ENCODE measurements at regions of chr14 and their contacts with region 1.

Region 1: DNA sequence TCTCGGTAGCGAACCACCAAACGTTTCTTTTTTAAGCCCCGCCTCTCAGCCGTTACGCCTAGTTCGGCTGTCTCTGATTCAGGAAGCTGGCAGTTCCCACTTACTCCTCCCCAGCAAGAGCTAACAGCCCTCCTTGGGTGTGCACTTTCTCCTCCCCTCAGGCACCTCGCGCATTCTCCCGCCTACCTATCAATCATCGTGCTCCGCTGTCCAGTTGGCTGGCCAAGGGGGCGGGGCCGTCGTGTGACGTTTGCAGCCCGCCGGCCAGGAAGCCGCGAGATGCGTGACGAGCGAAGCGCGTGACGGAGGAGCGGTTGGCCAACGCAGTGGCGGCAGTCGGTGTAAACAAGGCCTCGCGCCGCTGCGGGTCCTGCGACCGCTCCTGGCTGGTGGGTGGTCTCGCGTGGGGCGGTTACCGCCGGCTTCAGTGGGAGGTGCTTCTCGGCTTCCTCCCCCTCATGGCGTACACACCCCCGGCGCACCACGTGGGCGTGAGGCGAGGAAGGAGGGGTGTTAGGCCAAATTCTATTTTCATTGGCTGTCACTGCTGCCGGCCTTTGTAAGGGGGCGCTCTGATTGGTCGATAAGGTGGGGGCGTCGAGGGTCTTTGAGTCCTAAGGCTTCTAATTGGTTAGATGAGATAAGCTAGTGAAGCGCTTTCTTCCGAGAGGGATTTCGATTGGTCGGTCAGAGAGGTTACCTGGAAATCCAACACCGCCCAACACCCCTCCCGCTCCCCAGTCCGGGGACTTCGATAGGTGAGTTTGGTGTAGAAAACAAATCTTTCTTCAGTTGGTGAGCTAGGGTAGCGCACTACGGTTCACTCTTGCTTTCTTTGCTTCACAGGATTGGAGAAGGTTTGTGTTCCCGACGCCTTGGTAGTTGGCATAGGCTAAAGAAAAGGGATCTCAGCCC is at the starts of genes DCAF11 and NRL:
- DNase-seq: peak; percentile 95 to 100 (median 98)
- ATAC-seq: peak; percentile 82
- H3K4me3 ChIP-seq: peak within 1 kb of the TSS; percentile 72 to 87
- H3K4me3 Mint-ChIP-seq: peak within 1 kb of the TSS; percentile 98
- H3K27ac ChIP-seq: peak within 1 kb of the TSS; percentile 97 to 99
- H3K27ac Mint-ChIP-seq: peak within 1 kb of the TSS; percentile 100
- H3K4me1 ChIP-seq: peaks cover 19% of the 10 kb centered on the region
- H3K4me1 Mint-ChIP-seq: peaks cover 31% of the 10 kb centered on the region
- H3K27me3 ChIP-seq: no peaks in the 10 kb centered on the region
- H3K27me3 Mint-ChIP-seq: no peaks in the 10 kb centered on the region
- CTCF ChIP-seq: no peak
- total RNA-seq, gene DCAF11: 88.7 to 89.7 TPM
- total RNA-seq, gene NRL: 3.4 to 3.8 TPM

Region 2: GRCh38 chr14:23301288-23301968 is 813.4 kb before region 1 on chr14:
- CTCF ChIA-PET with region 1: no interaction called
- POLR2A ChIA-PET with region 1: no interaction called
- intact Hi-C with region 1: loop called in 1 of 2 experiments (anchors 10 kb)
- DNase-seq: peak; percentile 93 to 99 (median 97)
- ATAC-seq: peak; percentile 74
- H3K4me3 ChIP-seq: peak overlapping the region; percentile 77 to 97
- H3K4me3 Mint-ChIP-seq: peak overlapping the region; percentile 97
- H3K27ac ChIP-seq: peak overlapping the region; percentile 97
- H3K27ac Mint-ChIP-seq: peak overlapping the region; percentile 98
- H3K4me1 ChIP-seq: peaks cover 19% of the 10 kb centered on the region
- H3K4me1 Mint-ChIP-seq: peaks cover 27% of the 10 kb centered on the region
- H3K27me3 ChIP-seq: no peaks in the 10 kb centered on the region
- H3K27me3 Mint-ChIP-seq: peaks cover 14% of the 10 kb centered on the region
- CTCF ChIP-seq: peak; percentile 68

Region 3: GRCh38 chr14:24058260-24058950 is 56.4 kb before region 1 on chr14:
- CTCF ChIA-PET with region 1: interaction called, 873 read pairs
- POLR2A ChIA-PET with region 1: interaction called, 8 read pairs
- intact Hi-C with region 1: no loop called
- DNase-seq: peak in 4 of 9 experiments; percentile 25 to 71 (median 58)
- ATAC-seq: peak; percentile 86
- H3K4me3 ChIP-seq: no peak overlapping the region
- H3K4me3 Mint-ChIP-seq: no peak overlapping the region
- H3K27ac ChIP-seq: no peak overlapping the region
- H3K27ac Mint-ChIP-seq: peak overlapping the region; percentile 53
- H3K4me1 ChIP-seq: no peaks in the 10 kb centered on the region
- H3K4me1 Mint-ChIP-seq: peaks cover 3% of the 10 kb centered on the region
- H3K27me3 ChIP-seq: no peaks in the 10 kb centered on the region
- H3K27me3 Mint-ChIP-seq: peaks cover 3% of the 10 kb centered on the region
- CTCF ChIP-seq: peak; percentile 94

Region 4: DNA sequence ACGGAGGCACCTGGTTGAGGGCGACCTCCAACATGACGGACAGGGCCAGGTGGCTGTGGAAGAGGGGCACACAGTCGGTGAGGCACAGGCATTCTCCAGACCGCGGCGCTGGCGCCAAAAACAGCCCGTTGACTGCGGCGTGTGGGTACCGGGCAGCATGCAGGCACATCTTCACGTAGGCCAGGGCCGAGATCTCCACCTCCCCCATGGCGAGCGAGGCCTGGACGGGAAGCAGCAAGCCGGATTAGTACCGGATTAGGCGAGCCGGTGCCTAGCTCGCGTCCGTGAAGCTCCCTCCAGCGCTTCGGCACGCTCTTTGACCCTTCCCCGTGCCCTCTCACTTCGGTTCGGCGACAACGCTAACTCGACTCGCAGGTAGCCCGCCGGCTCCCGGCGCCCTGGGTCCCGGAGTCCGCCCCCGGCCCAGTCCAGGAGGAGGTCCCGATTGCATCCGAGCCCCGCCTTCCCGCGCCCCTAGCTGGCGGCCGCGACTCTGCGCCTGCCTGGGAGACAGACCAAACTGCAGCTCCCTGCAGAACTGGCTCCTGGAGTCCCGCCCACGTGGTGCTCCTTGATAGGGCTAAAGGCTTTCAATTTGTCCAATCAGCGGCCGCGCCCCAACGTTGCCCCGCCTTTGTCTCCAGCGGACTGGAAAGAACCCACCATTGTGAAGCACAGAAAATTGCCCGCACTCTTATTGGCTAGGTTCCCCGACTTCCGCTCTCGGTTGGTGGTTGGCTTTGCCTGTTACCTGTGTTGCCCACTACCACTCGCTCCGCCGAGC is 26.5 kb after region 1 on chr14 and contains the start of gene EMC9:
- CTCF ChIA-PET with region 1: interaction called, 29 read pairs
- POLR2A ChIA-PET with region 1: interaction called, 56 read pairs
- intact Hi-C with region 1: loop called (anchors 1 kb)
- DNase-seq: peak; percentile 98 to 100 (median 99)
- ATAC-seq: peak; percentile 90
- H3K4me3 ChIP-seq: peak within 1 kb of the TSS; percentile 81 to 89
- H3K4me3 Mint-ChIP-seq: peak within 1 kb of the TSS; percentile 86
- H3K27ac ChIP-seq: peak within 1 kb of the TSS; percentile 49 to 74
- H3K27ac Mint-ChIP-seq: peak within 1 kb of the TSS; percentile 84
- H3K4me1 ChIP-seq: peaks cover 51% of the 10 kb centered on the region
- H3K4me1 Mint-ChIP-seq: peaks cover 73% of the 10 kb centered on the region
- H3K27me3 ChIP-seq: no peaks in the 10 kb centered on the region
- H3K27me3 Mint-ChIP-seq: no peaks in the 10 kb centered on the region
- CTCF ChIP-seq: no peak
- total RNA-seq, gene EMC9: 7.8 to 10.4 TPM

Region 5: DNA sequence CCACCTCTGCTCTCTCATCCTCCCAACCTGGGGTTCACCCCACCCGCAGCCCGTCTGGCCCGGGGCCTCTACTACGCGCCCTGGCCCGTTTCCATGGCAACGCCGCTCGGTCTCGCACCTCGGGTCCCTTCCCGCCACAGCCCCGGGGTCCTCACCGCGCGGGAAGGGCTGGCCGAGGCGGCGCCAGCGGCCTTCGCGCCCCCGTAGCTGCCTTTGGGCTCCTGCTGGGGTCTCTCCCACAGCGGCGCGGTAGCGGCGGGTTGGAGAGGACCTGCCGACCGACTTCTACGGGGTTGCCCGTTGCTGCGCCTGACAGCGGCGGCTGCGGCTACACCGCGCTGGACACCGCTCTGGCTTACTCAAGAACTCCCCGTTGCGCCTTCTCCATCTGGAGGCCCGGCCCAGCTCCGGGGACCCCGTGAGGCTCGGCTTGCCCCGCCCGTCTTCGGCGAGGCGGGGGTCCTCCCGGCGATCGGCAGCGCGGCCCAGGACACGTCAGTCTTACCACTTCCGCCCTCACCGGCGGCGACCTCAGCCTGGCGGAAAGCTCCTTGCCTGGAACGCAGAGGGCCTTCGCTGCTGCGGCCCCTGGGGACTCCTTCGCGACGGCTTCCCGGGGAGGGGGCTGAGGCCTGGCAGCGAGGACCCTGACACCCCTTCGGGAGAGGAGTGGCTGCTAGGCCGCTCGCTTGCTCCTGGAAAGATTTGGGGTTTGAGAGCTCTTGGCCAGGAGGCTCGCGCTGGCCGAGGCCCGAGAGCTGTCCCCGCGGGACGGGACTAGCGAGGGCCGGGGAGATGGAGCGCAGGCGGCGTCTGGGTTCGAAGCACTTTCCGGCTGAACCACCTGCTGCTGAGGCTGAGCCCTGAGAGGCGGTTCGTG is 80.6 kb after region 1 on chr14 and contains the start of gene TM9SF1:
- CTCF ChIA-PET with region 1: no interaction called
- POLR2A ChIA-PET with region 1: interaction called, 17 read pairs
- intact Hi-C with region 1: no loop called
- DNase-seq: peak; percentile 81 to 96 (median 91)
- ATAC-seq: peak; percentile 83
- H3K4me3 ChIP-seq: peak within 1 kb of the TSS; percentile 87 to 94
- H3K4me3 Mint-ChIP-seq: peak within 1 kb of the TSS; percentile 94
- H3K27ac ChIP-seq: peak within 1 kb of the TSS; percentile 99 to 100
- H3K27ac Mint-ChIP-seq: peak within 1 kb of the TSS; percentile 98
- H3K4me1 ChIP-seq: peaks cover 31% of the 10 kb centered on the region
- H3K4me1 Mint-ChIP-seq: peaks cover 50% of the 10 kb centered on the region
- H3K27me3 ChIP-seq: no peaks in the 10 kb centered on the region
- H3K27me3 Mint-ChIP-seq: no peaks in the 10 kb centered on the region
- CTCF ChIP-seq: no peak
- total RNA-seq, gene TM9SF1: 17.5 to 20.4 TPM

Region 6: GRCh38 chr14:24271134-24271833 is 156.5 kb after region 1 on chr14 and contains the start of gene RABGGTA:
- CTCF ChIA-PET with region 1: no interaction called
- POLR2A ChIA-PET with region 1: interaction called, 3 read pairs
- intact Hi-C with region 1: loop called (anchors 1 kb)
- DNase-seq: peak; percentile 85 to 99 (median 91)
- ATAC-seq: peak; percentile 84
- H3K4me3 ChIP-seq: peak within 1 kb of the TSS; percentile 81 to 90
- H3K4me3 Mint-ChIP-seq: peak within 1 kb of the TSS; percentile 91
- H3K27ac ChIP-seq: peak within 1 kb of the TSS; percentile 93 to 97
- H3K27ac Mint-ChIP-seq: peak within 1 kb of the TSS; percentile 98
- H3K4me1 ChIP-seq: peaks cover 31% of the 10 kb centered on the region
- H3K4me1 Mint-ChIP-seq: peaks cover 36% of the 10 kb centered on the region
- H3K27me3 ChIP-seq: no peaks in the 10 kb centered on the region
- H3K27me3 Mint-ChIP-seq: no peaks in the 10 kb centered on the region
- CTCF ChIP-seq: peak; percentile 50
- total RNA-seq, gene RABGGTA: 59.1 to 65.9 TPM